Activated B cell treated with CpG ODN at 0.5 μM for 24 hours (primary cell): ENCODE measurements at regions of chr20 and their contacts with region 1.

Region 1: GRCh38 chr20:18793625-18794427 is 19.8 kb upstream of the SCP2D1 start:
- DNase-seq: peak; percentile 73
- ATAC-seq: peak; percentile 92
- H3K4me3 Mint-ChIP-seq: peak overlapping the region; percentile 93
- H3K27ac Mint-ChIP-seq: peak overlapping the region; percentile 97
- H3K4me1 Mint-ChIP-seq: peaks cover 18% of the 10 kb centered on the region
- H3K27me3 Mint-ChIP-seq: peaks cover 11% of the 10 kb centered on the region
- CTCF ChIP-seq: no peak

Region 2: DNA sequence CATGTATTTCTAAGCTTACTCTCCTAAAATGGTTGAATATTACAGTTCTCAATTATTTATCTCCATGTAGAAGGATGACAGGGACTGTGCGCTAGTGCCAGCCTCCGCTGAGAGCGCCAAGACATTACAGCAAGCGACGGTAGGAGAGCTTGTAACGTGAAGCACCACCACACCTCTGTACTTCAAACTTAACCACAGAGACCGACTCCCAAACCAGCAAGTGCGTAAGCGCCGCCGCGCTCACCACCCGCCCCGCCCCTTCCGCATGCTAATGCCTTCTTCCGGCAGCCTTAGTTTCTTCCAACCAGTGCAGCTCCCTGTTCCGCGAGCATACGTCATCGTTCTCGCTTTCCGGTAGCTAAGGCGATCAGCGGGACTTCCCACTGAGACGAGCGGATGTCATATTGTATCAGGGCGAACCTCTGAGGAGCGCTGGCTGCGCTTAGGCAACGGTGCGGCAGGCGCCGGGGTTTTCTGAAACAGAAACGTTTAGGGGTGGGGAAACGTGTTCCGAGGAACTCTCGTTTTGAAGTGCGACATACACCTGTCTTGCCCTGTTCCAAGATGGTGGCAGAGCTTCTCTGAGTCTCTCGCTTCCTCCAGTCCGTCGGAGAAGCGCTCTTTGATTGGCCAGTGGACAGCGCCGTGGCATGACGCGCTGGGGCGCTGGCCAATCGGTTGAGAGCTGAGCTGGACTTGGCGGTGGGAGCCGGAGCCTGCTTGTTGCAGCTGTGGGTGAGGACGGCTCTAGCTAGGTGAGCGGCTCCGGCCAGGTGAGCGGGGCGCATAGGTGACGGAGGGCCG is 286.4 kb before region 1 on chr20 and contains the start of gene SEC23B:
- CTCF ChIA-PET with region 1: no interaction called
- POLR2A ChIA-PET with region 1: interaction called, 5 read pairs
- intact Hi-C with region 1: loop called (anchors 1 kb)
- DNase-seq: peak; percentile 92
- ATAC-seq: peak; percentile 92
- H3K4me3 Mint-ChIP-seq: peak within 1 kb of the TSS; percentile 100
- H3K27ac Mint-ChIP-seq: peak within 1 kb of the TSS; percentile 100
- H3K4me1 Mint-ChIP-seq: peaks cover 36% of the 10 kb centered on the region
- H3K27me3 Mint-ChIP-seq: peaks cover 2% of the 10 kb centered on the region
- CTCF ChIP-seq: no peak
- total RNA-seq, gene SEC23B: 52.0 and 56.6 TPM in 2 replicates

Region 3: GRCh38 chr20:18587665-18588573 is 205.9 kb before region 1 on chr20 and contains the start of gene DTD1:
- CTCF ChIA-PET with region 1: no interaction called
- POLR2A ChIA-PET with region 1: interaction called, 3 read pairs
- intact Hi-C with region 1: loop called (anchors 1 kb)
- DNase-seq: peak; percentile 88
- ATAC-seq: peak; percentile 95
- H3K4me3 Mint-ChIP-seq: peak within 1 kb of the TSS; percentile 93
- H3K27ac Mint-ChIP-seq: peak within 1 kb of the TSS; percentile 90
- H3K4me1 Mint-ChIP-seq: peaks cover 24% of the 10 kb centered on the region
- H3K27me3 Mint-ChIP-seq: peaks cover 9% of the 10 kb centered on the region
- CTCF ChIP-seq: no peak
- total RNA-seq, gene DTD1: 26.3 and 27.5 TPM in 2 replicates

Region 4: DNA sequence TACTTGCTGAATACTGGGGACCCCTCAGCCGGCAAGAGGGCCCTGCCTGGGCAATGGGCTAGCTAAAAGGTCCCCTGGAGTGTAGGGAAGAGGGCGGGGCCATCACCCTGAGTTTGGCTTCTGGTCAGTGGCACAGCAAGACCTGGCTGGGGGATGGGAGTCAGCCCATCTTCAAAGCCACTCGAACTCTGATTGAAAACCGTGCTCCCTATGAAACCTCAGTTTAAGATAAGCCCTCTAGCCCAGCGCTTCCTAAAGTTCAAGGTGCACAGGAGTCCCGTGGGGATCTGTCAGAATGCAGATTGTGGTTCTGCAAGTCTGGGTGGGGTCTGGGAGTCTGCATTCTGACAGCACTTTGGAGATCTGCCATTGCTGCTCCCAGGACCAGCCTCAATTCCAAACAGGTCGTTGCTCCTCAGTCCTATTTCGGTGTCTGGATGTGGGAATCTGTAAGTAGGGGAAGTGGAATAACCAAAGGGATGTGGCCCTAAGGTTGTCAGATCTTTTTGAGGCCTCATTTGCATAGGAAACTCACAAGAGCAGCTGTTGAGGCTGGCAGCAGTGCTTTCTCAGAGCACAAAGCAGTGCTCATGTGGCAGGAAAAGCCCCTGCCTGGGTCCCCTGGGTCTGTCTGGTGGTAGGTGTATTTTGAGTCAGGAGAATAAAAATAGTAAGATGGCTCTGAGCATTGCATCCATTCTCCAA is 65.5 kb before region 1 on chr20:
- CTCF ChIA-PET with region 1: no interaction called
- POLR2A ChIA-PET with region 1: interaction called, 5 read pairs
- intact Hi-C with region 1: loop called (anchors 2 kb)
- DNase-seq: peak; percentile 40
- ATAC-seq: peak; percentile 96
- H3K4me3 Mint-ChIP-seq: peak overlapping the region; percentile 64
- H3K27ac Mint-ChIP-seq: peak overlapping the region; percentile 70
- H3K4me1 Mint-ChIP-seq: peaks cover 42% of the 10 kb centered on the region
- H3K27me3 Mint-ChIP-seq: no peaks in the 10 kb centered on the region
- CTCF ChIP-seq: no peak

Region 5: DNA sequence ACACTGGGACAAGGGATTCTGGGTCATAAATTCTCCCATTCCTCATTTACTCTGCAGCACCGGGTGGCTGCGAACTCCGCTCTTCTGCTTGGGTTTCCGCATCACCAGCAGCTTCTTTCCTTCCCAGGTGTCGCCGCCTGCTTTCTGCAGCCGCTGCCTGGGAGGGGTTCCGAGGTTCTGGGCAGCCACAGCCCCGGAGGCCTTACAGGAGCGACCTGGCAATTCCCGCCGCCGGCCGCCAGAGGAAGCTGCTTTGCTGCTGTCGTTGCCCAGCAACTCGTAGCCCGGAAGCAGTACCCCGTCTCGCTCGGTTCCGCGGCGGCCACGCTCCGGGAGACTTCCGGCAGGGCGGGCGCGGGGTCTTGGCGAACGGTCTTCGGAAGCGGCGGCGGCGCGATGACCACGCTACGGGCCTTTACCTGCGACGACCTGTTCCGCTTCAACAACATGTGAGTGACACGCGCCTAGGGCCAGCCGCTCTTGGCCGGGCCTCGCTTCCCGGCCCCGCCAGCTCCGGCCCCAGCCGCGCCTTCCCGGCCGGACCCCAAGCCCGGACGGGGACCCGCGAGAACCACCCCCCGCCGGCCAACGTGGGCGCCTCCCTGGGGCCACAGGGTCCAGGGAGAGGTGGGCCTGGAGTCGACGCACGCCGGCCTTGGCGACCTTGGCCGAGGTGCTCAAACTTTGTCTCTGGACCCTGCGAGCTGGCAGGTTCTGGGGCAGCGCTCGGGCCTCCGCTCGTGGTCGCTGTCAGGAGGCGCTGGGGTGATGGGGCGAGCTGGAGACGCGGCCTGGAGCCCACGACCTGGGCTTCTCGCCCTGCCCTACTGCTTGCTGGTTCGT is 1223.4 kb after region 1 on chr20 and contains the start of gene NAA20:
- CTCF ChIA-PET with region 1: no interaction called
- POLR2A ChIA-PET with region 1: no interaction called
- intact Hi-C with region 1: loop called (anchors 10 kb)
- DNase-seq: peak; percentile 83
- ATAC-seq: peak; percentile 99
- H3K4me3 Mint-ChIP-seq: peak within 1 kb of the TSS; percentile 91
- H3K27ac Mint-ChIP-seq: peak within 1 kb of the TSS; percentile 90
- H3K4me1 Mint-ChIP-seq: peaks cover 41% of the 10 kb centered on the region
- H3K27me3 Mint-ChIP-seq: no peaks in the 10 kb centered on the region
- CTCF ChIP-seq: no peak
- total RNA-seq, gene NAA20: 44.8 and 47.6 TPM in 2 replicates